ENCODE measurements at regions of chr12 and their contacts with region 1.

Region 1: DNA sequence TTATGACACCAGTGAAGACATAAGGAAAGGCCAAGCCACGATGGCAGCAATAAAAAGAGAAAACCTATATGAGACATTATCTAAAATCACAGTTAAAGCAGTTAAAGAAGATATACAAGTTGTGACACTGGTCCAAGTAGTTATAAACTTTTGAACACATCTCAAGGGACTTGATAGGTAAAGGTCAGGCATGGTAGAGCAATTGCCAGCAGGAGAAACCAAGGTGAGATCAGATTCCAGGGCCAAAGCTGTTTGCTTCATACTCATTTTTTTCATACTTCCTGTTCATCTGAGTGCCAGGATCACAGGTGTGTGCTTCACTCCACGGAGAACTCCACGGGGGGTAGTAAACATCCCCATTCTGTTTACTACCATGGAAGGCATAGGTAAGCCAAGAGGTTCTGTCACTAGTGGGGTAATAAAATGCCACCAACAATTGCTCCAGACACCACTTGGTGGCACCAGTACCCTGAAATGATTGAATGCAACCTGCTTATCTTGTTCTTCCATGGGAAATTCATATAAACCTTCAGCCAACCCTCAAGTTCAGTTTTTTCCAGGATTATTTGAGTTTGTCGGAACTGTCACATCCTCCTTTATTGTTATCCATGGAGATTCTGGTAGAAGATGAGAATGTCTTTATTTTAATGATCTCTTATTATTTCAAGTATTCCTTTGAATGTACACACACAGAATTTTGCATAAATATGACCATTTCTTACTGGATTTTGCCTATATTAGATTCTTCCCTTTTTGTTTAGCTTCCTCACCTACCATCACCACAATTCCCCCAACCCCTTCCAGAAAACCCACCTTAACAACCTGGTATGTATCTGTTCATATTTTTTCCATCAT is 59.2 kb upstream of the TSPAN8 start:
- DNase-seq: peak; percentile 57 to 68 (median 60)
- H3K4me3 ChIP-seq: no peak overlapping the region
- H3K27ac ChIP-seq: no peak overlapping the region
- H3K4me1 ChIP-seq: no peaks in the 10 kb centered on the region
- H3K27me3 ChIP-seq: no peaks in the 10 kb centered on the region

Region 2: DNA sequence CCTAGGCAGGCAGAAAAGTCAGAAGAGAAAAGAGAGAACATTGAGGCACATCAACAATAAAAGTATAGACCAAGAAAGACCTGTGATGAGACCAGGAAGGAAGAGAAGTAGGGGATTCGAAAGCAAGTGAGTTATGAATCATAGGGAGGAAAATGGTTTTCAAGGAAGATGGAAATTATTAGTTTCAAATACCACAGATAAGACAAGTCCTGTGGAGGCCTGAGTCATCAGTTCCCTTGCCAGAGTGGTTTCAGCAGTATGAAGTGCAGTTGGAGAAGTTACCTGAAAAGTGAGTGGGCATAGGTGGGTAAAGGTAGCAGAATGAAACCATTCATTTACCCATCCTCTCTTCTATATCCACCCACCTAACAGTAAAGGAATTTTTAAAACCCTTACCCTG is 33.9 kb before region 1 on chr12:
- CTCF ChIA-PET with region 1: no interaction called
- POLR2A ChIA-PET with region 1: no interaction called
- DNase-seq: no peak
- H3K4me3 ChIP-seq: no peak overlapping the region
- H3K27ac ChIP-seq: no peak overlapping the region
- H3K4me1 ChIP-seq: no peaks in the 10 kb centered on the region
- H3K27me3 ChIP-seq: no peaks in the 10 kb centered on the region

Region 3: GRCh38 chr12:71276541-71276940 is 59.6 kb after region 1 on chr12:
- CTCF ChIA-PET with region 1: no interaction called
- POLR2A ChIA-PET with region 1: no interaction called
- DNase-seq: no peak
- H3K4me3 ChIP-seq: no peak overlapping the region
- H3K27ac ChIP-seq: no peak overlapping the region
- H3K4me1 ChIP-seq: no peaks in the 10 kb centered on the region
- H3K27me3 ChIP-seq: peaks cover 0 to 3% (median 0%) of the 10 kb centered on the region in 5 experiments

Region 4: GRCh38 chr12:71392521-71393145 is 175.7 kb after region 1 on chr12:
- CTCF ChIA-PET with region 1: interaction called, 30 read pairs
- POLR2A ChIA-PET with region 1: no interaction called
- DNase-seq: peak; percentile 62 to 80 (median 79)
- H3K4me3 ChIP-seq: no peak overlapping the region
- H3K27ac ChIP-seq: no peak overlapping the region
- H3K4me1 ChIP-seq: peaks cover 0 to 2% (median 0%) of the 10 kb centered on the region in 4 experiments
- H3K27me3 ChIP-seq: no peaks in the 10 kb centered on the region